OCI-LY7 (cell line): ENCODE measurements at regions of chr15 and their contacts with region 1.

Region 1: DNA sequence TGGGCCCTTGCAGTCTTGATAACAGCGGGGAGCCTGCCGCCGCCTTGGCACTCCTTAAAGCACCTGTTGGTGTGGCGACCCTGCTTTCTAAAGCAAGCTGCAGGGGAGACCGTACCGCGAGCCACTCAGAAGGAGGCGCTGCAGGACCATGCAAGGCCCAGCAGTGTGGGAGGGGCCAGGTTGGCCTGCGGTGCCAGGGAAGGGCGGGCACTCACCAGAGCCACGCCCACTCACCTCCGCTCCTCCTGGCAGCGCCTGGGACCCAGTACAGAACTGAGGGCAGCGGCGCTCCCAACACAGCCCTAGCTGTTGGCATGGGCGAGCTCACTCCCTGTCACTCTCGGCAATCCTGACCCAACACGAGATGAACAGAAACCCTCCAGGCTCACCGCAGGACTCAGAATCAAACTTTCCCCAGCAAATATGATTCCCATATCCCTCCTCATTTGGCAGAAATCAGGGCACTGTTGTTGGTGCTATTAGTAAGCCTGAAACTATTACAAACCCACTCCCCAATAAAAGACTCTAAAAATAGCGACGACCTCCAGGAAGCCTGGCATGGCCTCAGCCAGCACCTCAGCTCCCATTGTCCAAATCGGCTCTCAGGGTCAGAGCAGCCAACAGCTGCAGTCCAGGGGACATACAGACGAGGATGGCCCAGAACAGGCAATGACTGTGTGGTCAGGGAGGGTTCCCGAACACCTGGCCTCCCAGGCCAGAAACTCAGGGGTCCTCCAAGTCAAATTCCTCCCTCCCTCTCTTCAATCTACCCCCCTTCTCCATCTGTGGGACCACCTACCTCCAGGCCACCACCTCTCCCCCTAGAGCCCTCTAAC is 77.2 kb downstream of the TBC1D2B start:
- DNase-seq: peak; percentile 90
- H3K4me3 ChIP-seq: no peak overlapping the region
- H3K27ac ChIP-seq: no peak overlapping the region
- H3K4me1 ChIP-seq: peaks cover 4% of the 10 kb centered on the region
- CTCF ChIP-seq: peak; percentile 84

Region 2: DNA sequence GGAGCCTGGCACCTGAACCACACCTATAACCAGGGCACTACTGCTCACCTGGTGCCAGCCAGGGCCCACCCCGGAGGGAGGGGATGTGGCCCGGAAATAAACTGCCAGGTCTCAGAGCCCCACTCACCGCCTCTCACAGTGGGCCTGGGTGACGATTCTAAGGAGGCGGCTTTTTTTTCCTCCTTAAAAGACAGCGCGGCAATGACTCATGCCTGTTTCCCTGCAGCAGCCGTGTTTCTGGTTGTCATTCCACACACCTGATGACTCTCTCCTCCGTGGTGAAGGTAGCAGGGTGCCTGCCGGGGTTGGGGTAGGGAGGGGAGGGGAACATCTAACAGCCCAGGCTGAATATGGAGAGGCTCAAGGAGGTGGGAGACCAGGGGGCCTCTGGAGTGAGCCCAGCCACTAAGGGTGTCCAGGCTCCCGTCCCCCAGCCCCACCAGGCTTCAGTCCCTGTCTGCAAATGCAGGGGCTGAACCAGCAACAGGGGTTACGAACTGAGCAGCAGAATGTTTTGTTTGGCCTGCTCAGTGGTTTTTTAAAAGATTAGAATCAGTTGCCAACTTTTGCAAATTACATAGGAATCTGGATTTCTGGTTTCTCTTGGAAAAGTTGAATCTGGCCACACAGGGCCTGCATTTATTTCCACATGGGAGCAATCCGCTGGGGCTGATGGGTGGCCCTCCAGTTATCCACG is 240.3 kb before region 1 on chr15:
- CTCF ChIA-PET with region 1: no interaction called
- POLR2A ChIA-PET with region 1: no interaction called
- intact Hi-C with region 1: no loop called
- DNase-seq: no peak
- H3K4me3 ChIP-seq: no peak overlapping the region
- H3K27ac ChIP-seq: no peak overlapping the region
- H3K4me1 ChIP-seq: no peaks in the 10 kb centered on the region
- CTCF ChIP-seq: no peak

Region 3: GRCh38 chr15:77966540-77967290 is 33.6 kb before region 1 on chr15:
- CTCF ChIA-PET with region 1: no interaction called
- POLR2A ChIA-PET with region 1: no interaction called
- intact Hi-C with region 1: loop called (anchors 2 kb)
- DNase-seq: peak; percentile 65
- H3K4me3 ChIP-seq: no peak overlapping the region
- H3K27ac ChIP-seq: no peak overlapping the region
- H3K4me1 ChIP-seq: peaks cover 7% of the 10 kb centered on the region
- CTCF ChIP-seq: peak; percentile 100